Activated CD4-positive, alpha-beta T cell treated with anti-CD3 and anti-CD28 coated beads for 36 hours (primary cell): ENCODE measurements at regions of chr16 and their contacts with region 1.

Region 1: DNA sequence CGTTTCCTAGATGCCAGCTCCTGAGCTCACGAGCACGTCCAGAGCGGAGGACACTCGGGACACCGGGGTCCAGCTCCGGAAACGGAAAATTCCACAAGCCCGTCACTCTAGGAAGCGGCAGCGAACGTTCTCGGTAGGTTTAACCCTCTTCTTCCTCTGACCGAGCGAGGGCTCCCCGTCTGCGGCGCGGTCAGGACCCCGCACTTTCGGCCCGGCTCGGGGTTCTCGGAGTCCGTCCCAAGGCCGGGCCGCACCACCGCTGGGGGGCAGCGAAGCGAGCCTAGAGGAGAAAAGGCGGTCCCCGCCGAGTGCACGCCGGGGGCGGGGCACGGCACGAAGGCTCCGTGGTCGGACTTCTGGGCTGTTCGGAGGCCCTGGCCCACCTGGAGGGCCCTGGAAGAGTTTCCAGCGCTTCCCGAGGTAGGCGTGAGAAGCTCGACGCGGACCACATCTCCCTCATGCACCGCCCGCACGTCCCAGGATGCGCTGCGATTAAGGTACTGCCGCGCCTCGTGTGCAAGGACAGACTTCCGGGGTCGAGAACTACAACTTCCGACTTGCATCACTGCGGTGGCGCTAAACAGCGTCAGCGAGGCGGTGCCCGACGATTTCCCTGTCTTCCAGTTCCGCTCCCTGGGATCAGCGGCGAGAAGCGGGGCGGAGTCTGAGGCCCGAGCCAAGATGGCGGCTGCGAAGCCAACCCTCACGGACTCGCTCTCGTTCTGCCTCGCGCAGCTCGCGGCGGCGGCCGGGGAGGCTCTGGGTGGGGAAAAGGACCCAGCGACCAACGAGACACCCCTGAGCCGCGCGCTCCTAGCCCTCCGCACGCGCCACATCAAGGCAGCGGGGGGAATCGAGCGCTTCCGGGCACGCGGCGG is at the start of gene ARMC5:
- DNase-seq: peak; percentile 98
- ATAC-seq: peak; percentile 81
- H3K4me3 Mint-ChIP-seq: peak within 1 kb of the TSS; percentile 85
- H3K27ac Mint-ChIP-seq: peak within 1 kb of the TSS; percentile 94
- H3K4me1 Mint-ChIP-seq: peaks cover 42% of the 10 kb centered on the region
- H3K27me3 Mint-ChIP-seq: no peaks in the 10 kb centered on the region
- total RNA-seq, gene ARMC5: 7.0 to 7.9 TPM

Region 2: GRCh38 chr16:30957456-30958174 is 501.5 kb before region 1 on chr16 and contains the start of gene SETD1A:
- CTCF ChIA-PET with region 1: no interaction called
- POLR2A ChIA-PET with region 1: interaction called, 10 read pairs
- intact Hi-C with region 1: loop called (anchors 1 kb)
- DNase-seq: peak; percentile 99
- ATAC-seq: peak; percentile 89
- H3K4me3 Mint-ChIP-seq: peak within 1 kb of the TSS; percentile 93
- H3K27ac Mint-ChIP-seq: peak within 1 kb of the TSS; percentile 99
- H3K4me1 Mint-ChIP-seq: peaks cover 37% of the 10 kb centered on the region
- H3K27me3 Mint-ChIP-seq: no peaks in the 10 kb centered on the region
- total RNA-seq, gene SETD1A: 18.5 to 21.7 TPM

Region 3: GRCh38 chr16:31094424-31095120 is 364.5 kb before region 1 on chr16 and contains the start of gene VKORC1:
- CTCF ChIA-PET with region 1: no interaction called
- POLR2A ChIA-PET with region 1: no interaction called
- intact Hi-C with region 1: loop called in 1 of 2 experiments (anchors 1 kb)
- DNase-seq: peak; percentile 96
- ATAC-seq: peak; percentile 92
- H3K4me3 Mint-ChIP-seq: peak within 1 kb of the TSS; percentile 98
- H3K27ac Mint-ChIP-seq: peak within 1 kb of the TSS; percentile 89
- H3K4me1 Mint-ChIP-seq: peaks cover 25% of the 10 kb centered on the region
- H3K27me3 Mint-ChIP-seq: no peaks in the 10 kb centered on the region
- total RNA-seq, gene VKORC1: 59.6 to 64.2 TPM

Region 4: DNA sequence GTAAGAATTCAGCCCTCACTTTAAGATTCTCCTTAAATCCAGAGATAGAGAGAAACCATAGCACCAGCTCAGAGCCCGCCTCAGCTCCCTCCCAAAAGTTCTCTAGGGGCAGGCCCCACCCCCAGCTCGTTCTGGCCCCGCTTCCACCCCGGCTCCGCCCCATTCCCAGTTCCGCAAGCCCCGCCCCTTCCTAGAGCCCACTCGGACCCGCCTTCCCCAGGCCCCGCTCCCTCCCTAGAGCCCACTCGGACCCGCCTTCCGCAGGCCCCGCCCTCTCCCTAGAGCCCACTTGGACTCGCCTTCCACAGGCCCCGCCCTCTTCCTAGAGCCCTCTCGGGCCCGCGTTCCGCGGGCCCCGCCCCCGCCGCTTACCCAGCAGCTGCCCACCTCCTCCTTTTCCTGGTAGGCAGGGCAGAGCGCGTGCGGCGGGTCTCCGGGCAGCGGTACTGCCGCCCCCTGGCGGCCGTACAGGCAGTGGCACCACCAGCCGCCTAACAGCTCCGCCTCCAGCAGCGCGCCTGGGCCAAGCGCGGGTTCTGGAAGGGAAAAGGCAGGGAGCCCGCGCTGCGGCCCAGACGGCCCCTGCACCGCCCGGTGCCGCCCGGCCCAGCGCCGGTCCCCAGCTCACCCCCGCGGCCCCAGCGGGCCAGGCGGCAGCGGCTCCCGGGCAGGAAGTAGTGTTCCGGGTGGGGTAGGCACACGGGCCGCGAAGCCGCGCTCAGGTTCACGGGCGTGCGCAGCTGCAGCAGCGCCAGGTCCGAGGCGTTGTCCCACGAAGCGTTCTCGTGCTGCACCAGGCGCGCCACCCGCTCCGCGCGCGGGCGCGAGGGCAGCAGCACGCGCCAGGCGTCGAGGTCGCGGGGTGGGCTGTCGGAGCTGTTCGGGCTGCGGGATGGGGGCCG is 316.7 kb before region 1 on chr16:
- CTCF ChIA-PET with region 1: interaction called, 4 read pairs
- POLR2A ChIA-PET with region 1: no interaction called
- intact Hi-C with region 1: loop called (anchors 1 kb)
- DNase-seq: peak; percentile 100
- ATAC-seq: peak; percentile 96
- H3K4me3 Mint-ChIP-seq: peak overlapping the region; percentile 62
- H3K27ac Mint-ChIP-seq: peak overlapping the region; percentile 80
- H3K4me1 Mint-ChIP-seq: peaks cover 12% of the 10 kb centered on the region
- H3K27me3 Mint-ChIP-seq: no peaks in the 10 kb centered on the region

Region 5: DNA sequence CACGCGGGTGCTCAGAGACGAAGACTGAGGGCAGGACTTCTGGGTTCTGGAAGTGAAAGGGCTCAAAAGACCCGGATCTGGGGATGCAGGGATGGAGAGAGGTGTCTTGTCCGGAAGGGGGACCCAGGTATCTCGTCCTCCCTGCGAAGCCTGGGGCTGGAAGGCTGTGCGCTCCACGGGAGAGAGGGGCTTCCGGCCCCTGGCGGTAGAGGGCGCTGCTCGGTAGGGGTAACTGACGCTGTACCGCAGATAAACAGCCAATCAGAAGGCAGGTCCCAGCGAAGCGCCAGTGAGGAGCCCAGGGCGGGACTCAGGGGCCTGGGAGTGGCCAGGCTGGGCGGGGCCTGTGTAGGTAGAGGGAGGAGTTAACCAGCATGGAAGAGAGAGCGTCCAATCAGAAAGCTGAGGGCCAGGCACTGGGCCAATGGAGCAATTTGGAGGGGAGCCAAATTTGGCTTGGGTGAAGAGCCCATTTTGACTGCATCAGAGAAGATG is 13.7 kb after region 1 on chr16:
- CTCF ChIA-PET with region 1: interaction called, 15 read pairs
- POLR2A ChIA-PET with region 1: interaction called, 6 read pairs
- intact Hi-C with region 1: loop called in 1 of 2 experiments (anchors 1 kb)
- DNase-seq: peak; percentile 74
- ATAC-seq: peak; percentile 54
- H3K4me3 Mint-ChIP-seq: peak overlapping the region; percentile 54
- H3K27ac Mint-ChIP-seq: no peak overlapping the region
- H3K4me1 Mint-ChIP-seq: peaks cover 22% of the 10 kb centered on the region
- H3K27me3 Mint-ChIP-seq: peaks cover 18% of the 10 kb centered on the region

Region 6: GRCh38 chr16:31700526-31701388 is 241.7 kb after region 1 on chr16:
- CTCF ChIA-PET with region 1: interaction called, 3 read pairs
- POLR2A ChIA-PET with region 1: no interaction called
- intact Hi-C with region 1: loop called (anchors 1 to 5 kb)
- DNase-seq: peak; percentile 94
- ATAC-seq: peak; percentile 87
- H3K4me3 Mint-ChIP-seq: peak overlapping the region; percentile 92
- H3K27ac Mint-ChIP-seq: peak overlapping the region; percentile 96
- H3K4me1 Mint-ChIP-seq: peaks cover 26% of the 10 kb centered on the region
- H3K27me3 Mint-ChIP-seq: no peaks in the 10 kb centered on the region

Region 7: GRCh38 chr16:31873556-31874365 is 414.7 kb after region 1 on chr16 and contains the start of gene ZNF267:
- CTCF ChIA-PET with region 1: interaction called, 17 read pairs
- POLR2A ChIA-PET with region 1: interaction called, 6 read pairs
- intact Hi-C with region 1: loop called (anchors 1 kb)
- DNase-seq: peak; percentile 96
- ATAC-seq: peak; percentile 60
- H3K4me3 Mint-ChIP-seq: peak within 1 kb of the TSS; percentile 94
- H3K27ac Mint-ChIP-seq: peak within 1 kb of the TSS; percentile 97
- H3K4me1 Mint-ChIP-seq: peaks cover 73% of the 10 kb centered on the region
- H3K27me3 Mint-ChIP-seq: no peaks in the 10 kb centered on the region
- total RNA-seq, gene ZNF267: 61.9 to 64.9 TPM